PC-9 (cell line): ENCODE measurements at regions of chr10 and their contacts with region 1.

Region 1: GRCh38 chr10:73956476-73957359 is 41.2 kb upstream of the VCL start:
- DNase-seq: peak; percentile 85 to 95
- H3K4me3 ChIP-seq: peak overlapping the region; percentile 15; the same call in 1 of the 2 replicates
- H3K27ac ChIP-seq: peak overlapping the region; percentile 89
- H3K4me1 ChIP-seq: peaks cover 44% of the 10 kb centered on the region
- H3K27me3 ChIP-seq: no peaks in the 10 kb centered on the region
- CTCF ChIP-seq: no peak

Region 2: DNA sequence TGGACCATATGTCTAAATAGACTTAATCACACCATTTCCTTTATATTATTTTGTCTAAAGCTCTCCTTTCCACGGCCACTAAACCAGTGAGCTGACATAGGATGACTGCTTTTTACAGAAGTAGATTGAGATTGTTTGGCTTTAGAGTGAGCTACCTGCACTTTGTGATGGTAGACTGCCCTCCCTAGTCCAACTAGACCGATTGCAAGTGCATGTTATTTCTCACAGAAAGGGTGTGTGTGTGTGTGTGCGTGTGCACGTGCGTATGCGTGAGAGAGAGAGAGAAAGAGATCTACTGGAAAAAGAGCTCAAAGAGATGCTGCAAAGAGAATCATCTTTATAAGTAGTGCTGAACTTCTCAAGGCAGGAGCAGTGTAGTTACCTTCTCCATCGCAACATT is 101.9 kb after region 1 on chr10:
- CTCF ChIA-PET with region 1: no interaction called
- POLR2A ChIA-PET with region 1: interaction called, 15 read pairs
- intact Hi-C with region 1: loop called (anchors 1 kb)
- DNase-seq: no peak
- H3K4me3 ChIP-seq: no peak overlapping the region
- H3K27ac ChIP-seq: peak overlapping the region; percentile 92; the same call in 1 of the 2 replicates
- H3K4me1 ChIP-seq: peaks cover 50% of the 10 kb centered on the region
- H3K27me3 ChIP-seq: no peaks in the 10 kb centered on the region
- CTCF ChIP-seq: no peak; the same call in 1 of the 2 replicates